Activated T-helper 1 cell treated with anti-CD3 and anti-CD28 coated beads, Interleukin-12 subunit alpha, Interleukin-12 subunit beta, Interleukin-2, Interleukin-4 antibody, amounts not matched to agents 30 ng/mL and 10 ng/mL and 1 ng/mL, durations not matched to agents 14 hours and 24 hours and 36 hours (primary cell): ENCODE measurements at regions of chr3 and their contacts with region 1.

Region 1: DNA sequence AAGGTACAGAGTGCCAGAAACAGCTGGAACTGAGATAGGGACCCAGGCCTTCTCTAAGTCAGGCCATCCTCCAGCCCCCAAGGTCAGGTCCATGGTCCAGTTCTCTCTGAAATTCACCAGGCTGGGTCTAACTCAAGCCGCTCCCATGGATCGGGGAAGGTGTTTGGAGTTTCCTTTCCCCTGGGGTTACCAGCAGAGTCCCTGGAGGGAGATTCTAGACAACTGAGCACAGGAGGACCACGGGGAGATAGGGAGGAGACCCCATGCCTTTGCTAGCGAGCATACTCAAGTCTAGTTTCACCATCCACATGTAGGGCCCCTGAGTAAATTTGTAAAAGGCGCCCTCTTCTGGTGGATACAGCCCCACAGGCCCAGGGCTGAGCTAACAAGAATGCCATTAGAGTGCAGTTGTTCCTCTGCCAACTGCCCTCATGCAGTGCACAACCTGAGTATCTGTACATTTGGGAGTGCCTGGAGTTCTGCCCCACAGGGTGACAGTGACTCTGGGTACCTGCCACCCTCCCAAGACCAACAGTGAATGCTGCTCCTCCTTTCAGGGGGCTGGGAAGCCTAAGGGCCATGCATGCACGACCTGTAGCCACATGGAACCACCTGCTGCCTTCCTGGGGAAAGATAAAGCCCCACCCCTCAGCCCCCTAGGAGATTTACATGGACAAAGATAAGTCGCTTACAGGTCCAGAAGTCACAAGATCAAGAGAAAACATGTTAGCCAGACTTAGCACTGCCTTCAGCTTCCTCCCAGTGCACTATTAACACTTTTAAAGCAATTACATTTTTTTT is 89.0 kb downstream of the IQSEC1 start:
- DNase-seq: peak; percentile 44
- H3K4me3 Mint-ChIP-seq: no peak overlapping the region
- H3K27ac Mint-ChIP-seq: no peak overlapping the region
- H3K4me1 Mint-ChIP-seq: peaks cover 38% of the 10 kb centered on the region
- H3K27me3 Mint-ChIP-seq: no peaks in the 10 kb centered on the region

Region 2: GRCh38 chr3:12782172-12782815 is 201.9 kb before region 1 on chr3:
- intact Hi-C with region 1: no loop called
- DNase-seq: no peak
- H3K4me3 Mint-ChIP-seq: no peak overlapping the region
- H3K27ac Mint-ChIP-seq: no peak overlapping the region
- H3K4me1 Mint-ChIP-seq: no peaks in the 10 kb centered on the region
- H3K27me3 Mint-ChIP-seq: peaks cover 14% of the 10 kb centered on the region

Region 3: DNA sequence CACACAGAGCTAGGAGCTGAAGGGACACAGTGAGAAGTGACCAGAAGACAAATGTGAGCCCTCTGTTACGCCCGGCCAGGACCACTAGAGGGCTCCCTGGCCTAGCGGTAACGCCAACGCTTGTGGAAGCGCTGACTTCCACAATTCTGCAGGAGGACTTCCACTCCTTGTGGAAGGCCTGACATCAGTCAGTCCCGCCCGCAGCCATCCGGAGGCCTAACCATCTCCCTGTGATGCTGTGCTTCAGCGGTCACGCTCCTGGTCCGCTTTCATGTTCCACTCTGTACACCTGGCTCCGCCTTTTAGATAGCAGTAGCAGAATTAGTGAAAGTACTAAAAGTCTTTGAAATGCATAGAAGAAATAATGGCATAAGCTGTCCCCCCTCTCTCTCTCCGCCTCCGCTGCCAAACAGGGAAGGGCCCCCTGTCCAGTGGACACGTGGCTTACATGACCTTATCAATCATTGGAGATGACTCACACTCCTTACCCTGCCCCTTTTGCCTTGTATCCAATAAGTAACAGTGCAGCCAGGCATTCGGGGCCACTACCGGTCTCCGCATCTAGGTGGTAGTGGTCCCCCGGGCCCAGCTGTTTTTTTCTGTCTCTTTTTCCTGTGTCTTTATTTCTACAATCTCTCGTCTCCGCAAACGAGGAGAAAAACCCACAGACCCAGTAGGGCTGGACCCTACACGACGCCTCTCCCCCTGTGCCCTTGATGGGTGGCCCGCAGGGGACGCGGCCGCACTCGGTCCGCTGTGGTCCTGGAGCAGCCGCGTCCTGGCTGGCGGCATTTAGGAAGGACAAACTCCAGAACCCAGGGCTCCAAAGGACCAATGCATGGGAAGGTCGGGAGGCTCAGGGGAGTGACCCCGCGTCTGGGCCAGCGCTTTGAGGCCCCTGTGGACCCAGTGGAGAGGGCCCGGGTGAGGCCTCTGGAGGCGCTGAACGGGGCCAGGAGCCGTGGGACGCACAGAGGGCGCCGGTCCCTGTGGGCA is 115.9 kb before region 1 on chr3:
- intact Hi-C with region 1: loop called (anchors 1 kb)
- DNase-seq: peak; percentile 43
- H3K4me3 Mint-ChIP-seq: peak overlapping the region; percentile 65
- H3K27ac Mint-ChIP-seq: no peak overlapping the region
- H3K4me1 Mint-ChIP-seq: peaks cover 17% of the 10 kb centered on the region
- H3K27me3 Mint-ChIP-seq: peaks cover 29% of the 10 kb centered on the region

Region 4: GRCh38 chr3:12948891-12949711 is 35.1 kb before region 1 on chr3:
- intact Hi-C with region 1: loop called (anchors 1 kb)
- DNase-seq: peak; percentile 32
- H3K4me3 Mint-ChIP-seq: peak overlapping the region; percentile 31
- H3K27ac Mint-ChIP-seq: peak overlapping the region; percentile 88
- H3K4me1 Mint-ChIP-seq: peaks cover 40% of the 10 kb centered on the region
- H3K27me3 Mint-ChIP-seq: no peaks in the 10 kb centered on the region

Region 5: DNA sequence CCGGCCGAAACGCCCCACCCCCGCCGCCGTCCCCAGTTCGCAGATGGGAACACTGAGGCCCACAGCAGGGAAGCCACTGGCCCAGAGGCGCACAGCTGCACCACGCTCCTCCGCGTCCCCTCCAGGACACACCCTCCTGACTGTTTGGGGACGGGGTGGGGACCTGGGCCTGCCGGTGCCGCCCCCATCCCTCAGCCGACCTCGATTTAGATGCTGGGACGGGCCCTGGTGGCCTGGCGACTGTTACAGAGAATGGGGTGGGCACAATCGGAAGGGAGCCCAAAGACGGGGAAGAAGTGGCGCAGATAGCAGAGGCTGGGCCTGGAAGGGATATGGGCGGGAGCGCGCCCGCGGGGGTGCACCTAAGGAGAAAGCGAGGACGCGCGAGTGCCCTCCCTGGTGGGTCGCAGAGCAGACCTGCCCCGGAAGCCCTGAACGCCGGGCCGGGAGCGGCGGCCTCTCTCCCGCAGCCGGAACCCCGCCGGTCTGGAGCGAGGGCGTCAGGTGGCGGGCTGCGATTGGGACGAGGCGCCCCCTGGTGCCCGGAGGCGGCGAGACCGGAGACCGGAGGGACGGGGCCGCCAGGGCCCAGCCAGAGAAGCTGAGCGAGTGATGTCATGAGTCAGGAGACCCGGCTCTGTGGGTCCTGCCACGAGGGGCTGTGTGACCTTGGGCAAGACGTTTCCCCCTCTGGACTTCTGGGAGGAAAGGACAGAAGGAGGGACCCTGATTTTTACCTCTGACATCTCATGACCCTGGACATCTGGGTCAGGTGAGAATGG is 10.6 kb after region 1 on chr3:
- intact Hi-C with region 1: loop called (anchors 1 kb)
- DNase-seq: peak; percentile 82
- H3K4me3 Mint-ChIP-seq: peak overlapping the region; percentile 83
- H3K27ac Mint-ChIP-seq: peak overlapping the region; percentile 81
- H3K4me1 Mint-ChIP-seq: peaks cover 30% of the 10 kb centered on the region
- H3K27me3 Mint-ChIP-seq: peaks cover 2% of the 10 kb centered on the region